Activated CD8-positive, alpha-beta T cell treated with anti-CD3 and anti-CD28 coated beads, Interleukin-2, amount 10 ng/mL, durations not matched to agents 7 days and 5 days (primary cell): ENCODE measurements at regions of chr5 and their contacts with region 1.

Region 1: DNA sequence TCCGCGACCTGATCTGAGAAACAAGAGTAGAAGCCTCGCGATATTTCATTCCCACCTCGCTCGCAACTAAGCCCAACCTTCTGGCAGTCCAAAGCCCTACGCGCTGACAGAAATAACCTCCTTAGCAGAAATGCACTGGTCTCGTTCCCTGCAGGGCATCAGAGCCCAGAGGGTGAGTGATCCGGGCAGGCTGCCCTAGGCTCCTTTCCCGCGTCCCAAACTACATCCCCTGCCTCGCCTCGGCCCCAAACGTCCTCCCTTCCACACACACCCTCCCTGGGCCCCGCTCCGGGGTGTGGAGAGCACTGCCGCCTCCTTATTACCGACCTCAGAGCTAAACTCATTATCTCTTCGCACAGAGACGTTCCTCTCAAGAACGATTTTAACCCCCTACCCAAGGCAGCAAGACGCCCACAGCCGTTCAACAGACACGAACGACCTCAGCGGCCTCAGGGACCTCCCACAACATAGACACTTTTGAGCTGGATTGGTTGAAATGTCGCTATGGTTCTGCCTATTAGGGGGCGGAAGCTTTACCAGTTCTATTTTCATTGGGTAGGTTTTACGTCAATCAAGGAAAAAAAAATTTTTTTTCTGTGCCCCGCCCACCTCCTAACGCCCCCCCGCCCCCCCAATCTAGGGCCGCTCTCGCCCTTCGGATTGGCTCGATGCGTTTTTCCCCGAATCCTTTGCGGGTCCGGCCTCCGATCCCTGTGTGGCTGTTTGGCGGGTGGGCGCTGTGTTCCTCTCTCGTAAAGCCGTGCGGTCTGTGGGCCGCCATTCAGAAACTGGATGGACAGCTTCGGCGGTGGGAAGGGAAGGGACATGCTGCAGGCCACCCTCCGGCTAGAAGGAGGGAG is at the start of gene CETN3:
- DNase-seq: peak; percentile 94
- ATAC-seq: peak; percentile 95
- H3K4me3 Mint-ChIP-seq: no peak within 1 kb of the TSS
- H3K27ac Mint-ChIP-seq: no peak within 1 kb of the TSS
- H3K4me1 Mint-ChIP-seq: peaks cover 11% of the 10 kb centered on the region
- H3K27me3 Mint-ChIP-seq: no peaks in the 10 kb centered on the region
- total RNA-seq, gene CETN3: 30.6 to 31.3 TPM

Region 2: GRCh38 chr5:90399251-90399650 is 10.3 kb before region 1 on chr5:
- CTCF ChIA-PET with region 1: interaction called, 6 read pairs
- POLR2A ChIA-PET with region 1: interaction called, 18 read pairs
- DNase-seq: no peak
- ATAC-seq: no peak
- H3K4me3 Mint-ChIP-seq: no peak overlapping the region
- H3K27ac Mint-ChIP-seq: no peak overlapping the region
- H3K4me1 Mint-ChIP-seq: no peaks in the 10 kb centered on the region
- H3K27me3 Mint-ChIP-seq: no peaks in the 10 kb centered on the region